ENCODE measurements at regions of chr2 and their contacts with region 1.

Region 1: GRCh38 chr2:69816923-69817542 is 12.4 kb upstream of the GMCL1 start:
- DNase-seq: peak; percentile 82
- ATAC-seq: peak; percentile 74
- H3K4me3 Mint-ChIP-seq: no peak overlapping the region
- H3K27ac Mint-ChIP-seq: no peak overlapping the region
- H3K4me1 Mint-ChIP-seq: peaks cover 4% of the 10 kb centered on the region
- H3K27me3 Mint-ChIP-seq: no peaks in the 10 kb centered on the region

Region 2: GRCh38 chr2:69559442-69560146 is 257.4 kb before region 1 on chr2:
- CTCF ChIA-PET with region 1: interaction called, 5 read pairs
- POLR2A ChIA-PET with region 1: no interaction called
- intact Hi-C with region 1: loop called (anchors 1 to 5 kb)
- DNase-seq: peak; percentile 27
- ATAC-seq: peak; percentile 75
- H3K4me3 Mint-ChIP-seq: no peak overlapping the region
- H3K27ac Mint-ChIP-seq: peak overlapping the region; percentile 58
- H3K4me1 Mint-ChIP-seq: peaks cover 87% of the 10 kb centered on the region
- H3K27me3 Mint-ChIP-seq: no peaks in the 10 kb centered on the region

Region 3: DNA sequence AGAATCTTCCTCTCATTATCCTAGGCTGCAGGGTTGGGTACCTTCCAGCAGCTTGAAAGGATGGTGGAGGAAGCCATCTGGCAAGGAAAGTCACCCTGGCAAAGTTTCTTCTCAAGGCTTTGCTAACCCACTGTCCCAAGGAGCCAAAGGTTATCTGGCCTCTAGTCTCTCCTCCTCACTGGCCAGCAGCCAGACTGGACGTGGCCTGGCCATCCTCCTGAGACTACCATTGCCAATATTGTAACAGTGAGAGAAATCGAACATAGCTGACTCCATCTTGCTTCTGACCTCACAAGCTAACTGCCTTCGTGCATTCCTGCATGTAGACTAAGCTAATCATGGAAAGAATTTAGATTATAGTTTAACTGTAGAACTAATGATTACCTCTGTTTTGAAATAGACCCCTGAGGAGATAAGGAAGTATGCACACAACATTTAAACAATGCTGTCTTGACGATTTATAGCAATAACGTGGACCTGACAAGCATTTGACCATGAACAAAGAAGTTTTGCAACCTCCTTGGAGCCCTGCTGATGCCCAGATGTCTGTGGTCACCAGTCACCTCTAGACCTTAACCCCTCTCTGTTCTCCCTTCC is 82.9 kb before region 1 on chr2:
- CTCF ChIA-PET with region 1: interaction called, 27 read pairs
- POLR2A ChIA-PET with region 1: no interaction called
- intact Hi-C with region 1: no loop called
- DNase-seq: no peak
- ATAC-seq: no peak
- H3K4me3 Mint-ChIP-seq: no peak overlapping the region
- H3K27ac Mint-ChIP-seq: no peak overlapping the region
- H3K4me1 Mint-ChIP-seq: no peaks in the 10 kb centered on the region
- H3K27me3 Mint-ChIP-seq: no peaks in the 10 kb centered on the region

Region 4: DNA sequence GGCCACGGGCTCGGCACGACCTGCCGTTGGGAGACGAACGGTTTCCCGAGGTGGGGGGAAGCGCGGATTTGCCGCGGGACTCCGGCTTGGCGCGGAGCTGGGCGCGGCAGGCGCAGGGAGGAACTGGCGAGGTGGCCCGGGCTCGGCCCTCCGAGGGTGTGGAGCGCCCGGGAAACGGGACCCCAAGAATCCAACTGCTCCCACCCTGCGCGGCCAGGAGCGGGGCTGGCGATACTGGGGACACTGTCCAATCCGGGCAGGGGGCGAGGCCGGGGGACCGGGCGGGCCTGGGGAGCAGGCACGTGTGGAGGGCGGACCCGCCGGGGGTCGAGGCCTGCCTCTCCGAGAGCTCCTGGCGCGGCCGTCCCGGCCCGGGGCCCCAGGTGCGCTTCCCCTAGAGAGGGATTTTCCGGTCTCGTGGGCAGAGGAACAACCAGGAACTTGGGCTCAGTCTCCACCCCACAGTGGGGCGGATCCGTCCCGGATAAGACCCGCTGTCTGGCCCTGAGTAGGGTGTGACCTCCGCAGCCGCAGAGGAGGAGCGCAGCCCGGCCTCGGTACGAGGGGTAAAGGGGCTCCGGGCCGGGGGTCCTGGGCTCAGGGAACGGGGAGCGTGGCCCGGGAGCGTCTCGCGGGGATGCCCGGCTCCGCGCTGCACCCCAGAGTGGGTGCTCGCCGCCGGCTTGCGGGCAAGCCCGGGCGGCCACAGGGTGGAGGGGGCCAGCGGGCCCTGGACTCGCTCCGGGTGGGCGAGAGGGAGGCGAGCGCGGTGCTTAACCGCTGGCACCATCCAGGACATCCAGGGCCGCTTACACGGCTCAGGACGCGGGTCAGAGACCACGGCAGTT is 75.2 kb before region 1 on chr2 and contains the start of gene ANXA4:
- CTCF ChIA-PET with region 1: interaction called, 8 read pairs
- POLR2A ChIA-PET with region 1: no interaction called
- intact Hi-C with region 1: loop called (anchors 5 kb)
- DNase-seq: peak; percentile 73
- ATAC-seq: peak; percentile 86
- H3K4me3 Mint-ChIP-seq: peak within 1 kb of the TSS; percentile 78
- H3K27ac Mint-ChIP-seq: peak within 1 kb of the TSS; percentile 81
- H3K4me1 Mint-ChIP-seq: peaks cover 11% of the 10 kb centered on the region
- H3K27me3 Mint-ChIP-seq: no peaks in the 10 kb centered on the region
- total RNA-seq, gene ANXA4: 24.8 to 30.7 TPM

Region 5: GRCh38 chr2:69798909-69799526 is 18.0 kb before region 1 on chr2:
- CTCF ChIA-PET with region 1: interaction called, 58 read pairs
- POLR2A ChIA-PET with region 1: no interaction called
- intact Hi-C with region 1: no loop called
- DNase-seq: no peak
- ATAC-seq: no peak
- H3K4me3 Mint-ChIP-seq: no peak overlapping the region
- H3K27ac Mint-ChIP-seq: no peak overlapping the region
- H3K4me1 Mint-ChIP-seq: peaks cover 13% of the 10 kb centered on the region
- H3K27me3 Mint-ChIP-seq: no peaks in the 10 kb centered on the region

Region 6: DNA sequence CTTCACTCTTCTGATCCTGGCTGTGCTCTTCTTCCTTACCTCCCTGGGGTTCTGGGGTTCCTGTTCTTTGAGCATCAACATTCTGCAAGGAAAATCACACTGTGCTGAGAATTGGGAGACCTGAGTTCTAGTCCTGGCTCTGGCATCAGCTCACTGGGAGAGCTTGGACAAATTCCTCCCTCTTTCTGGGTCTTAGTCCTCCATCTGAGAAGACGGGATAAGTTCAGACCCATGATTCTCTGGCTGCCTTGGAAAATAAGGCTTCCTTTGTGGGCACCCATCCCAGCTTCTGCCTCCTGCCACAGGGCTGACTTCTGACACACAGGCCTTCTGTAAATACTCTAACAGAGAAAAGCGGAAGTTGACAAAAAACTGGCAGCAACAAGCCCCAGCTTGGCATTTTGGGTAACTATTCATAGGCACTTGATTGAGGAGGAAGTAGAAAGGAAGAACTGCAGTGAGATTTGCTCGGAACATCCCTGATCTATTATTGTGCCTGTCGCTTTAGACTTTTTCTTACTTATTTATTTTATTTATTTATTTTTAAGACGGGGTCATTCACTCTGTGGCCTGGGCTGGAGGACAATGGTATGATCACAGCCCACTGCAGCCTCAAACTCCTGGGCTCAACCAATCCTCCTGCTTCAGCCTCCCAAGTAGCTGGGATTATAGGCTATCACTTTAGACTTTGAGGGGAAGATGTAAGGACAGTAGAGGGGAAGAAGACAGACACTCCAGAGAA is 278.1 kb after region 1 on chr2:
- CTCF ChIA-PET with region 1: no interaction called
- POLR2A ChIA-PET with region 1: no interaction called
- intact Hi-C with region 1: no loop called
- DNase-seq: peak; percentile 67
- ATAC-seq: peak; percentile 82
- H3K4me3 Mint-ChIP-seq: peak overlapping the region; percentile 75
- H3K27ac Mint-ChIP-seq: peak overlapping the region; percentile 97
- H3K4me1 Mint-ChIP-seq: peaks cover 59% of the 10 kb centered on the region
- H3K27me3 Mint-ChIP-seq: no peaks in the 10 kb centered on the region